PC-9 (cell line): ENCODE measurements at regions of chr14 and their contacts with region 1.

Region 1: DNA sequence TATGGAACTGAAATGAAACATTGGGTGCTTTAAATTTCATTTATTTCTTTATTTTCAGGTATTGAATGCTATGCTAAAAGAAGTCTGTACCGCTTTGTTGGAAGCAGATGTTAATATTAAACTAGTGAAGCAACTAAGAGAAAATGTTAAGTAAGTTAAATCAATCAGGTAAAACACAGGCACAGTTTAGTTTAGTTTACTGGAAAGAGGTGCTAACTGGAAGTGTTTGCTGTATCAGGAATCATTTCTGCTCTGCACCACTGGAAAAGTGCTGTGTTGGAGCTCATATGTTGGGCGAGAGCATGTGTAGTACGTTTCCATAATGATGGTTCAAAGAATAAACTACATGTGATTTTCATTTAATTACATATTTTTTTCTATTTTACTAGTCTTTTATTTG is 16.7 kb downstream of the SRP54 start:
- DNase-seq: no peak
- H3K4me3 ChIP-seq: no peak overlapping the region
- H3K27ac ChIP-seq: no peak overlapping the region
- H3K4me1 ChIP-seq: no peaks in the 10 kb centered on the region
- H3K27me3 ChIP-seq: no peaks in the 10 kb centered on the region
- CTCF ChIP-seq: no peak

Region 2: GRCh38 chr14:34662561-34663088 is 336.9 kb before region 1 on chr14:
- CTCF ChIA-PET with region 1: no interaction called
- POLR2A ChIA-PET with region 1: interaction called, 10 read pairs
- intact Hi-C with region 1: no loop called
- DNase-seq: no peak
- H3K4me3 ChIP-seq: no peak overlapping the region
- H3K27ac ChIP-seq: no peak overlapping the region
- H3K4me1 ChIP-seq: peaks cover 11% of the 10 kb centered on the region
- H3K27me3 ChIP-seq: no peaks in the 10 kb centered on the region
- CTCF ChIP-seq: no peak

Region 3: GRCh38 chr14:35052637-35053036 is 53.1 kb after region 1 on chr14:
- CTCF ChIA-PET with region 1: no interaction called
- POLR2A ChIA-PET with region 1: no interaction called
- intact Hi-C with region 1: no loop called
- DNase-seq: no peak
- H3K4me3 ChIP-seq: no peak overlapping the region
- H3K27ac ChIP-seq: no peak overlapping the region
- H3K4me1 ChIP-seq: peaks cover 9% of the 10 kb centered on the region; the same call in 1 of the 2 replicates
- H3K27me3 ChIP-seq: no peaks in the 10 kb centered on the region
- CTCF ChIP-seq: no peak